Posterior vena cava (tissue), 2 donors: ENCODE measurements at regions of chr3 and their contacts with region 1.

Region 1: DNA sequence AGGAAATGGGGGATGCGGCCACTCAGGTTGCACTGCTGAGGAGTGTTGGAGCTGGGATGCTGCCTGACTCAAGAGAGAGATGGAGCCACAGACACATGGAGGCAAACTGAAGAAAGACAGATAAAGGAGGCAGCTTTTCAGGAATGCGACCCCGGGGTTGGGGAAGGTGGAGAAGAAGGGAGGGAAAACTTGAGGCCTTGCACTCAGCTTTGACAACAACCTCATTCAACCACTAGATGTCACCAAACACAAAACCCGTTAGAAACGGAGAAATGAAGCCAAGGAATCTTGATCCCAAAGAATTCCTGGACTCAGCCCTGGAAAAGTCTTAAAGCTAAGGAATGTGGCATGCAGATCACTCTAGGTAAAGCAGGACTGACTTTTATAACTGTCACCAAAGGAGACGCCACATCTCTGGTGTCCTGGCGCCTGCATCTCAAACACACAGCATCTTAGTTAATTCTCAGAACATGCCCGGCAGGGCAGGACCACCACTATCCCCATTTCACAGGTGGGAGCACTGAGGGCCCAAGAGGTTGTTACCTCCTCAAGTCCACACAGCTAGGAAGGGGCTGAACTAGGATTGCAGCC is 59.6 kb upstream of the LMCD1 start:
- DNase-seq: no peak

Region 2: GRCh38 chr3:8324740-8325139 is 117.3 kb before region 1 on chr3:
- intact Hi-C with region 1: no loop called
- DNase-seq: peak; percentile 79

Region 3: GRCh38 chr3:8607234-8608040 is 165.4 kb after region 1 on chr3:
- intact Hi-C with region 1: loop called in 1 of 2 experiments (anchors 5 kb)
- DNase-seq: peak; percentile 87

Region 4: DNA sequence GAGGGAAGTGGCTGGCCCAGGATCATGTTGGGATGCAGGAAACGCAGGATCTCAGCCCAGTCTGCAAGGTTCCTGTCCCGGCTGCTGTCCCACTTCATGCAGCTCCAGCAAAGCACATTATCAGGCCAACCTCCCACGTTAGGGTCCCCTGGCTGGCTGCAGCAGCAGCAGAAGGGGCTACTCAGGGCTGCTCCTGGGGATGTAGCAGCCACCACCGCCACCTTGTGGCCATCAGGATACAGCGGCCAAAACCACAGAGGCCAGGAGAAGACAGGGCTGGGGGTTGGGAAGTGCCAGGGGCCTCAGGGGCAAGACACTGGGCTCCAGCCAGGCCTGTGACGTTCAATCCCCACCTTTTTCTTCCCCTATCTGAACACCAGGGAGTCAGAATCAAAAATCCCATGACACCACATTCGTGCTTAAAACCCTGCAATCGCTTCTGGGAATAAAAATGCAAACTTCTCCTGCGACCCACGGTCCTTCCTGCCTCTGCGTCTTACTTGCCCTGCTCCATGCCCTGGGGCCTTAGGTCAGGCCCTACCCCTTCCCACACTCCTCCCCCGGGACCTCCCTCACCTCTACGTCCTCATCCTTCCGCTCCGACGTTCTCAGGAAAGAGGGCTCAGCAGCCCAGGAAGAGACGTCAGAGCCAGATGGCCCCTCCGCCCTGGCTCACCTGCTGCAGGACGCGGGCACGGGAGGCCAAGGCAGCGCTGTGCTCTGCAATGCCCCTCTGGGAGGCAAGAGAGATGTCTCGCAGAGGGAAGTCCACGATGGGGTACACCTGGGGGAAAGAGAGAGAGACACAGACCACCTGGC is 181.0 kb after region 1 on chr3:
- intact Hi-C with region 1: loop called (anchors 5 kb)
- DNase-seq: peak; percentile 89